SK-N-SH (cell line): ENCODE measurements at regions of chr17 and their contacts with region 1.

Region 1: DNA sequence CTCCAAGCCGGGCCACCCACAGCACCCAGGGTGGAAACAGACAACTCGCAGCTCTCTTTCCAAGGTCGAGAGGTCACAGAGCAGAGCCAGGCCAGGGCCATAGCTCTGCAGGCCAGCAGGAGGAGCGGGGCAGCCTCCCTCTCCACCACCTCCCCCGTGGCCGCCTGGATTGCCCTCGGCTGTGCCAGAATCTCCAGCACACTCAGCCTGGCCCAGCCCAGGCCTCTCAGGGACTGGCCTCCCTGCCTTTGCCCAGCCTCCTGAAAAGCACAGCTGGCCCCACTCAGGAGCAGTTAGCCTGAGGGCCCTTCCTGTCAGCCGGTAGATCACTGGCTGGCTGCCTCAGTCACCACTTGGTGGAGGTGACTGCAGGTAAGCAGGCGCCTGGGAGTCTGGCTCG is 85.8 kb upstream of the SEC14L1 start:
- DNase-seq: peak; percentile 87
- H3K4me3 ChIP-seq: no peak overlapping the region
- H3K27ac ChIP-seq: no peak overlapping the region
- H3K4me1 ChIP-seq: peaks cover 0 to 18% of the 10 kb centered on the region in 2 experiments; a peak in 1 of 4 replicates
- H3K27me3 ChIP-seq: peaks cover 49% of the 10 kb centered on the region
- CTCF ChIP-seq: no peak
- EP300 ChIP-seq: 0 out of 4 replicates have a peak, but pooled peaks of 1 of the 2 experiments have one; percentile 45
- RAD21 ChIP-seq: 0 out of 2 replicates have a peak, but pooled peaks have one; percentile 8

Region 2: DNA sequence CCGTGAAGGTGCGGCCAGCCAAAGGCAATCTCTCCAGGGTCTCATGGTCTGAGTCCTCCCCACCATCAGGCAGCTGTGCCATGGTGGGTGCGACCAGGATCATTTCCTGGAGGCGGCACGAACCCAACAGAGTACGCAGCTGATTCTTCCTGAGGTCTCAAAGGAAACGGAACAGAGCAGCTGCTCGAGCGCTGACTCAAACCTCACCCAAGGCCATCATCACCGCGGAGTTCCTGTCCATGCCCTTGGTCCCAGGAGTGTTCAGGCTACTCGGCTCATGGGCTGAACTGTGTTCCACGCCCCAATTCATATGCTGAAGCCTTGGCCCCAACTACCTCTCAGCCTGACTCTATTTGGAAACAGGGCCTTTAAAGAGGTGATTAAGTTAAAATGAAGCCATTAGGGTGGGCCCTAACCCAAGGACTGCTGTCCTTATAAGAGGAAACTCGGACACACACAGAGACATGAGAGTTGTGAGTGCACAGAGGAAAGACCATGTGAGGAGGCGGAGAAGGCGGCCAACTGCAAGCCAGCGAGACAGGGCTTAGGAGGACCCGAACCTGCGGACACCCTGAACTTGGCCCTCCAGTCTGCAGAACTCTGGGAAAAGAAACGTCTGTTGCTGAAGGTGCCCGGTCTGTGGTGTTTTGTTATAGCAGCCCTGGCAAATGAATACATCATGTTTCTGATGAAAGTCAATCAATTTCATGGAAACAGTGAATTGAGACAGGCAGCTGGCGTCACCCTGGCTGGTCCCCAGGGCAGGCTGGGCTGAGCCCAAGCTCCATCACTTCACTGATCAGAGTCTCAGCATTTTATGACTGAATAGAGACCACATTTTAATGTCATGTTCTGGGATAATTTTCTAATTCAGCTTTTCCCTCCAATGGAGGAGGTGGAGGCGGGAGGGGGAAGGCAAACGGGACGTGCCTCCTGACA is 357.9 kb before region 1 on chr17:
- CTCF ChIA-PET with region 1: no interaction called
- POLR2A ChIA-PET with region 1: no interaction called
- DNase-seq: no peak
- H3K4me3 ChIP-seq: no peak overlapping the region
- H3K27ac ChIP-seq: peak overlapping the region in 1 of 2 experiments; percentile 78; a peak in 2 of 4 replicates
- H3K4me1 ChIP-seq: peaks cover 26 to 45% of the 10 kb centered on the region in 2 experiments
- H3K27me3 ChIP-seq: no peaks in the 10 kb centered on the region
- CTCF ChIP-seq: no peak
- EP300 ChIP-seq: no peak
- RAD21 ChIP-seq: no peak

Region 3: DNA sequence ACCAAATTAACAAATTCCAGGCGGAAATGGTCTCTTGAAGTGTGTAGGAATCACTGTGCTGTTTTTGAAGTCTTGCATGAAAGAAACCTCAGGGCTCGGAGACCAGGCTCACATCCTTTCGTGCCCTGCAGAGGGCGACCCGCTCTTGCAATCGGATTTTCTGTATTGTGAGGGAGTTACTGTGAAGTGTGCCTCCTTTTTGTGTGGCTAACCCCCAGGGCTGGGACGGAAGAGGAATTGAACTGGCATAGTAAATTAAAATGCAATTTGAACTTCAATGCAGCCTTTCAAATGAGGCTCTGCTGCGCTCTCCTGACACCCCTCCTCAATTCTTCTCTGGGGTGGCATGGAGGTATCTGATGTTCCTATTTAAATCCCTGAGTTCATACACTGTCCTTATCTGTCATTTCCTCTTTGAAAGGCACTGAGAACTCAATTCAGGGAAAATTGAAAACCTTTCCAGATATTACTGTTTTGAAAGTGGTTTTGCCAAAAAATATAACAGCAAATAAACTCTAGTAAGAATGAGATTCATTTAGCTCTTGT is 238.3 kb before region 1 on chr17:
- CTCF ChIA-PET with region 1: interaction called, 124 read pairs
- POLR2A ChIA-PET with region 1: no interaction called
- DNase-seq: peak; percentile 85
- H3K4me3 ChIP-seq: no peak overlapping the region
- H3K27ac ChIP-seq: no peak overlapping the region
- H3K4me1 ChIP-seq: peaks cover 0 to 14% of the 10 kb centered on the region in 2 experiments; a peak in 1 of 4 replicates
- H3K27me3 ChIP-seq: peaks cover 12% of the 10 kb centered on the region; the same call in 1 of the 2 replicates
- CTCF ChIP-seq: peak; percentile 93
- EP300 ChIP-seq: no peak
- RAD21 ChIP-seq: peak; percentile 98

Region 4: GRCh38 chr17:76887802-76888201 is 167.1 kb before region 1 on chr17:
- CTCF ChIA-PET with region 1: interaction called, 18 read pairs
- POLR2A ChIA-PET with region 1: no interaction called
- DNase-seq: no peak
- H3K4me3 ChIP-seq: no peak overlapping the region
- H3K27ac ChIP-seq: no peak overlapping the region
- H3K4me1 ChIP-seq: no peaks in the 10 kb centered on the region; a peak in 1 of 4 replicates
- H3K27me3 ChIP-seq: no peaks in the 10 kb centered on the region
- CTCF ChIP-seq: 0 out of 2 replicates have a peak, but pooled peaks have one; percentile 26
- EP300 ChIP-seq: no peak
- RAD21 ChIP-seq: no peak

Region 5: DNA sequence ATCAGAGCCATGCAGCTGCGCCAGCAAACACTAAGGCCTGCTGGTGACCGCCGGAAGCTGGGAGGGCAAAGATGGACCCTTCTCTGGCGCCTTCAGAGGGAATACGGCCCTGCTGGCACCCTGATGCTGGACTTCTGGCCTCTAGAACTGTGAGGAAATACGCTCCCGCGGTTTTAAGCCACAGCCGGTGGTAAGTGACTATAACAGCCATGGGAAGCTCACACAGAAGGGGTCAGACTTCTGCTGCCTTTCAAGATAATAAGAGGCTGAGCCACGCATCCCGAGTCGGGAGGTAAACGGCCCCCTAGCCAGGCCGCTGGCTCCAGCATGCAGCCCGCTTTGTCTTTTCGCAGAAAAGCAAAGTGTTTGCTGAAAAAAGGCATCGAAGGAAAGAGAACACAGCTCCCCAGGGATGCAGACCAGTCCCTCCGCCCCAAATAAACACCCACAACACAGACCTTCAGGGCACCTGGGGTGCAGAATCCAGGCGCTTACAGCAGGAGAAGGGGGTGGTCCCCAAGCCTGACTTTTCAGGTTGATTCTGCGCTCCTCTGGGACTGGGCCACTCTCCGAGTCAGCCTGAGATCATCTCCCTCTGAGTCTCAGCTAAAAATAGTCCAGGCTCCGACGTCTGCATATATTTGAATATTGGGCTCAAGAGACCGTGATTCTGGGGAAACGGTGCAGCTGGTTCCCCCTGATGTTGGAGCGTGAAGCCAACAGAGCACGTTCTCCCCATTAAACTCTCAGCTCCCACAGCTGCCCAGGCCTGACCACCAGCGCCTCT is 97.1 kb before region 1 on chr17:
- CTCF ChIA-PET with region 1: interaction called, 21 read pairs
- POLR2A ChIA-PET with region 1: no interaction called
- DNase-seq: no peak
- H3K4me3 ChIP-seq: no peak overlapping the region
- H3K27ac ChIP-seq: no peak overlapping the region
- H3K4me1 ChIP-seq: peaks cover 0 to 8% of the 10 kb centered on the region in 2 experiments; a peak in 2 of 4 replicates
- H3K27me3 ChIP-seq: no peaks in the 10 kb centered on the region
- CTCF ChIP-seq: no peak
- EP300 ChIP-seq: no peak
- RAD21 ChIP-seq: no peak

Region 6: DNA sequence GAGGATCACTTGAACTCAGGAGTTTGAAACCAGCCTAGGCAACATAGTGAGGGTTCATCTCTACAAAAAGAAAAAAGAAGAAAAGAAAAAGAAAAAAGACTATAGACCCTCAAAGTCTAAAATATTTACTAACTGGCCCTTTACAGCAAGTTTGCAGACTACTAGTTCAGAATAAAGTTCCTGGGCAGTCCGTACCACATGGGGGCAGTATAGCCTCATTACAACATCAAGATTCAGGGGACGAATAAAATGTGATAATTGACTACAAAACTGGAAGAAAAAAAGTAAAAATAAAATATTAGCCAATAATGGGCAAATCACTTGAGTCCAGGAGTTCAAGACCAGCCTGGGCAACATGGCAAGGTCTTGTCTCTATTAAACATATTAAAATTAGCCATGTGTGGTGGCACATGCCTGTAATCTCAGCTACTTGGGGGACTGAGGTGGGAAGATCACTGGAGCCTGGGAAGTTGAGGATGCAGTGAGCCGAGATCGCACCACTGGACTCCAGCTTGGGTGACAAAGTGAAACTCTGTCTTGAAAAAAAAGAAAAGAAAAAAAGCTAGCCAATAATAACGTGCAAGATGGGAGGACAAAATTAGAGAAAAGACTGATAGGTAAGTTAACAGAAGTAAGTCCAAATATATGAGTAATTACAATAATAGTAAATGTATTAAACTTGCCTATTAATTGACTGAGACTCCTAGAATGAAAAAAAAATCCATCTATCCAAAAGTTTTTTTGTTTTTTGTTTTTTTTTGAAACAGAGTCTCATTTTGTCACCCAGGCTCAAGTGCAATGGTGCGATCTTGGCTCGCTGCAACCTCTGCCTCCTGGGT is 43.5 kb before region 1 on chr17:
- CTCF ChIA-PET with region 1: interaction called, 88 read pairs
- POLR2A ChIA-PET with region 1: no interaction called
- DNase-seq: peak; percentile 58
- H3K4me3 ChIP-seq: peak overlapping the region in 1 of 2 experiments; percentile 1; a peak in 1 of 4 replicates
- H3K27ac ChIP-seq: no peak overlapping the region
- H3K4me1 ChIP-seq: no peaks in the 10 kb centered on the region
- H3K27me3 ChIP-seq: no peaks in the 10 kb centered on the region
- CTCF ChIP-seq: peak; percentile 72
- EP300 ChIP-seq: no peak
- RAD21 ChIP-seq: peak; percentile 83

Region 7: GRCh38 chr17:77083531-77083930 is 28.6 kb after region 1 on chr17:
- CTCF ChIA-PET with region 1: interaction called, 21 read pairs
- POLR2A ChIA-PET with region 1: interaction called, 4 read pairs
- DNase-seq: no peak
- H3K4me3 ChIP-seq: no peak overlapping the region
- H3K27ac ChIP-seq: no peak overlapping the region; a peak in 1 of 4 replicates
- H3K4me1 ChIP-seq: peaks cover 5 to 16% of the 10 kb centered on the region in 2 experiments; a peak in 1 of 4 replicates
- H3K27me3 ChIP-seq: no peaks in the 10 kb centered on the region
- CTCF ChIP-seq: no peak
- EP300 ChIP-seq: no peak
- RAD21 ChIP-seq: no peak

Region 8: GRCh38 chr17:77109764-77110359 is 54.9 kb after region 1 on chr17:
- CTCF ChIA-PET with region 1: no interaction called
- POLR2A ChIA-PET with region 1: no interaction called
- DNase-seq: no peak
- H3K4me3 ChIP-seq: no peak overlapping the region
- H3K27ac ChIP-seq: peak overlapping the region in 1 of 2 experiments; percentile 28; a peak in 3 of 4 replicates
- H3K4me1 ChIP-seq: peaks cover 0 to 13% of the 10 kb centered on the region in 2 experiments; a peak in 2 of 4 replicates
- H3K27me3 ChIP-seq: no peaks in the 10 kb centered on the region
- CTCF ChIP-seq: no peak
- EP300 ChIP-seq: no peak
- RAD21 ChIP-seq: no peak